SK-N-SH (cell line): ENCODE measurements at regions of chr7 and their contacts with region 1.

Region 1: DNA sequence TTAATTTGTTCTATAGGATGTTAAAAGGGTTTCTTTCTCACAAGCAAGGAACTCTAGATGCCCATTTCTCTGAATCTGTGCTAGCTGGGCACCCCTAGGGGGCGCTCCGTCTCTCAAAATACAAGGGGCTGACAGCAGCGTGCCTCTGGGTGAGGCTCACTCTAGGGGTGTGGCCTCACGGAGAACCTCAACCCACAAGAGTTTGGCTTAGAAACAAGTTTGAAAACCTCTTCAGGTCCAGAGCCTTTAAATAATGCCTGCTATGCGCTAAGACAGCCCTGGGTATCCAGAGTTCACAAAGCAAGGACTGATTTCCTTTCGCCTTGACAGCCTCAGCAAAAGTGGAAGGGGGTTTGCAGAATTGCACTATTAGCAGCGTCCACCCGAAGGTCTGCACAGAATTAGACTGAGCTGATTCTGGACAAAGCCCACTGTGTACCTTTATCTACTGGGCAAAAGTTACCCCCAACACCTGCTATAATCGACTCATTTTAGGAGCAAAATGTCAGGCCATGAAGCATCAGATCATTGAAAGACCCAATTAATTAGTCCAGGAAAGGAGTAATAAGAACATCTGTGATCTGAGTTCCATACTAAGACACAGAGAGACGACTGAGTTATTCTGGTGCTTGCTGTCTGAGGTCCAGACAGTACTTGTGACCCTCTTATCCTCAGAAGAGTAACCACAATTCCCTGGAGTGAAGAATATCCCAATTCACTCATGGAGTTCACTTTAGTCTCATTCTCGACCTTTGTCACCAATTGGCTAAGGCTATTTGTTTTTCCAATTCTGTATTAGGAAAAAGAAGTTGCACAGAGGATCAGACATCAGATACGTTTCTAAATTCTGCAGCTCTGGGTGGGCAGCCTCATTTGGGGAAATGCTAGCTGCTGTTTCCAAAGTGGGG is 574 bp upstream of the CPED1 start:
- DNase-seq: peak; percentile 84
- H3K4me3 ChIP-seq: peak overlapping the region; percentile 49 to 62
- H3K27ac ChIP-seq: peak overlapping the region; percentile 70 to 73; a peak in 3 of 4 replicates
- H3K4me1 ChIP-seq: peaks cover 12 to 31% of the 10 kb centered on the region in 2 experiments; a peak in 3 of 4 replicates
- H3K27me3 ChIP-seq: no peaks in the 10 kb centered on the region
- CTCF ChIP-seq: peak; percentile 100
- EP300 ChIP-seq: 0 out of 4 replicates have a peak, but pooled peaks of 1 of the 2 experiments have one; percentile 36
- RAD21 ChIP-seq: peak; percentile 98

Region 2: GRCh38 chr7:120950539-120951308 is 37.2 kb before region 1 on chr7 and contains the start of gene ING3:
- CTCF ChIA-PET with region 1: interaction called, 9 read pairs
- POLR2A ChIA-PET with region 1: interaction called, 11 read pairs
- DNase-seq: peak; percentile 96
- H3K4me3 ChIP-seq: peak within 1 kb of the TSS; percentile 92 to 98
- H3K27ac ChIP-seq: peak within 1 kb of the TSS; percentile 96 to 100
- H3K4me1 ChIP-seq: peaks cover 5 to 20% of the 10 kb centered on the region in 2 experiments; a peak in 2 of 4 replicates
- H3K27me3 ChIP-seq: peaks cover 3% of the 10 kb centered on the region; the same call in 1 of the 2 replicates
- CTCF ChIP-seq: no peak
- EP300 ChIP-seq: no peak; a peak in 1 of 4 replicates
- RAD21 ChIP-seq: peak; percentile 30
- polyA plus RNA-seq, gene ING3: 8.3 and 12.5 TPM in 2 replicates

Region 3: GRCh38 chr7:121006711-121007315 is 18.9 kb after region 1 on chr7:
- CTCF ChIA-PET with region 1: interaction called, 73 read pairs
- POLR2A ChIA-PET with region 1: no interaction called
- DNase-seq: no peak
- H3K4me3 ChIP-seq: no peak overlapping the region
- H3K27ac ChIP-seq: no peak overlapping the region
- H3K4me1 ChIP-seq: peaks cover 12 to 14% of the 10 kb centered on the region in 2 experiments; a peak in 3 of 4 replicates
- H3K27me3 ChIP-seq: no peaks in the 10 kb centered on the region
- CTCF ChIP-seq: no peak
- EP300 ChIP-seq: no peak
- RAD21 ChIP-seq: no peak

Region 4: DNA sequence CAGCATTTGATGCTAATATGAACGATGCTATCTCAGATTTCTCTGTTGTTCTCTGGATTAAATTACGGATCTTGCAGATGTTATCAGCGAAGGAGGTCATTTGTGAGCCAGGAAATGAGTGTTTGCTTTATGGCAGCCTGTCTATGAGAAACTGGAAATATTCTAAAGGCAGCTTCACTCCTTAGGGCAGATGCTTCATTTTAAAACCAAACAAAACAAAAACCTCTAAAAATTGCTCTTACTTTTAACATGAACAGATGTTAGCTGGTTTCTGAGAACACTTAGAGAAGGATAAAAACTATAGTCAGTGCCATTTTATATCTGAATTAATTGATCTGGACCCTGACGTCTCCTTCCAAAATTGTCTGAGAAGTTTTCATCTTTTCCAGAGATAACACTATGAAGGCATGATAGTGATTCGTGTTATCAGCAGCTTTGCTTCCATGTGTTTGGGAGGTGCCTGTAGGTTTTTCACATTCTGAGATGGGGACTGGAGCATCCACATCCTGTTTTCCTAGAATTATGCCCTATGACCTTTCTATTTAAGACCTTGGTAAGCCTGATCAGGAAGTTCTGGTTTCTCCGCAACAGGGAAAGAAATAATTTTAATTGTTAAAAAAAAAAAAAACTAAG is 53.7 kb after region 1 on chr7:
- CTCF ChIA-PET with region 1: interaction called, 68 read pairs
- POLR2A ChIA-PET with region 1: no interaction called
- DNase-seq: peak; percentile 44
- H3K4me3 ChIP-seq: peak overlapping the region in 1 of 2 experiments; percentile 14; a peak in 2 of 4 replicates
- H3K27ac ChIP-seq: peak overlapping the region; percentile 72 to 84
- H3K4me1 ChIP-seq: peaks cover 0 to 12% of the 10 kb centered on the region in 2 experiments; a peak in 2 of 4 replicates
- H3K27me3 ChIP-seq: no peaks in the 10 kb centered on the region
- CTCF ChIP-seq: no peak
- EP300 ChIP-seq: peak; percentile 83 to 94
- RAD21 ChIP-seq: peak; percentile 17; the same call in 1 of the 2 replicates

Region 5: GRCh38 chr7:121069346-121070100 is 81.6 kb after region 1 on chr7:
- CTCF ChIA-PET with region 1: interaction called, 397 read pairs
- POLR2A ChIA-PET with region 1: no interaction called
- DNase-seq: no peak
- H3K4me3 ChIP-seq: no peak overlapping the region
- H3K27ac ChIP-seq: no peak overlapping the region
- H3K4me1 ChIP-seq: peaks cover 0 to 3% of the 10 kb centered on the region in 2 experiments; a peak in 2 of 4 replicates
- H3K27me3 ChIP-seq: no peaks in the 10 kb centered on the region
- CTCF ChIP-seq: no peak
- EP300 ChIP-seq: no peak
- RAD21 ChIP-seq: no peak

Region 6: GRCh38 chr7:121107923-121108498 is 120.1 kb after region 1 on chr7:
- CTCF ChIA-PET with region 1: interaction called, 71 read pairs
- POLR2A ChIA-PET with region 1: no interaction called
- DNase-seq: peak; percentile 45
- H3K4me3 ChIP-seq: no peak overlapping the region
- H3K27ac ChIP-seq: no peak overlapping the region
- H3K4me1 ChIP-seq: no peaks in the 10 kb centered on the region
- H3K27me3 ChIP-seq: no peaks in the 10 kb centered on the region
- CTCF ChIP-seq: peak; percentile 99
- EP300 ChIP-seq: no peak
- RAD21 ChIP-seq: peak; percentile 95